ENCODE measurements at regions of chr3 and their contacts with region 1.

Region 1: DNA sequence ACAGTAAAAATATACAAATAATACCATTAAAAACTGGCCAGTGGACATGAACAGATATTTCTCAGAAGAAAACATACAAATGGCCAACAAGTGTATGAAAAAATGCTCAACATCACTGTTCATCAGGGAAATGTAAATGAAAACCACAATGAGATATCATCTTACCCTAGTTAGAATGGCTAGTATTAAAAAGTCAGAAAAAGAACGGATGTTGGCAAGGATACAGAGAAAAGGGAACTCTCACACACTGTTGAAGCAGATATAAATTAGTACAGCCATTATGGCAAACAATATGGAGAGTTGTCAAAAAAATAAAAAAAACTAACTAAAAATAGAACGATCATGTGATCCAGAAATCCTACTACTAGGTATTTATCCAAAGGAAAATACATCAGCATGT is 222.7 kb upstream of the NAALADL2 start:
- DNase-seq: no peak
- H3K4me3 ChIP-seq: no peak overlapping the region
- H3K27ac ChIP-seq: no peak overlapping the region
- H3K4me1 ChIP-seq: no peaks in the 10 kb centered on the region
- H3K27me3 ChIP-seq: no peaks in the 10 kb centered on the region
- CTCF ChIP-seq: no peak
- POLR2A ChIP-seq: no peak

Region 2: GRCh38 chr3:174002543-174002942 is 633.9 kb before region 1 on chr3:
- CTCF ChIA-PET with region 1: no interaction called
- POLR2A ChIA-PET with region 1: no interaction called
- dilution Hi-C with region 1: no loop called
- intact Hi-C with region 1: no loop called
- DNase-seq: peak; percentile 26
- H3K4me3 ChIP-seq: no peak overlapping the region
- H3K27ac ChIP-seq: no peak overlapping the region
- H3K4me1 ChIP-seq: no peaks in the 10 kb centered on the region
- H3K27me3 ChIP-seq: no peaks in the 10 kb centered on the region
- CTCF ChIP-seq: peak; percentile 11 to 29
- POLR2A ChIP-seq: no peak

Region 3: DNA sequence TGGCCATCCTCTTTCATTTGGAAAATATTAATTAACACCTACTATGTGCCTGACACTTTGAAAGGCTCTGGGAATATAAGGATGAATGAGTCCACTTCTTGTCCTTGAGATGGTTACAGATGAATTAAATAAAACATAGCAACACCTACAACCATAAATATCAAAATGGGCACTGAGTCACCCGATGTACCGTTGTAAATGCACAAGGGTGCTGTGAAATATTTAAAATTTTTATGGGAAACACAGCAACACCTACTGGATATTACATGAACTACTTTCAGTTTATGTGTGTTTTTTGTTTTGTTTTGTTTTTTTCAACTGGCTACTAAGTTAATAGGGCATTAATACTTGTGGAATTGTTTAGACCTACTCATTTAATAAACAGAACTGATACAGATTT is 16.3 kb before region 1 on chr3:
- CTCF ChIA-PET with region 1: interaction called, 11 read pairs
- POLR2A ChIA-PET with region 1: no interaction called
- dilution Hi-C with region 1: no loop called
- intact Hi-C with region 1: no loop called
- DNase-seq: peak; percentile 6
- H3K4me3 ChIP-seq: no peak overlapping the region
- H3K27ac ChIP-seq: no peak overlapping the region
- H3K4me1 ChIP-seq: no peaks in the 10 kb centered on the region
- H3K27me3 ChIP-seq: no peaks in the 10 kb centered on the region
- CTCF ChIP-seq: peak in 1 of 2 donors; percentile 5
- POLR2A ChIP-seq: no peak